Posterior cingulate gyrus (tissue), 11 donors: ENCODE measurements at regions of chr1 and their contacts with region 1.

Region 1: DNA sequence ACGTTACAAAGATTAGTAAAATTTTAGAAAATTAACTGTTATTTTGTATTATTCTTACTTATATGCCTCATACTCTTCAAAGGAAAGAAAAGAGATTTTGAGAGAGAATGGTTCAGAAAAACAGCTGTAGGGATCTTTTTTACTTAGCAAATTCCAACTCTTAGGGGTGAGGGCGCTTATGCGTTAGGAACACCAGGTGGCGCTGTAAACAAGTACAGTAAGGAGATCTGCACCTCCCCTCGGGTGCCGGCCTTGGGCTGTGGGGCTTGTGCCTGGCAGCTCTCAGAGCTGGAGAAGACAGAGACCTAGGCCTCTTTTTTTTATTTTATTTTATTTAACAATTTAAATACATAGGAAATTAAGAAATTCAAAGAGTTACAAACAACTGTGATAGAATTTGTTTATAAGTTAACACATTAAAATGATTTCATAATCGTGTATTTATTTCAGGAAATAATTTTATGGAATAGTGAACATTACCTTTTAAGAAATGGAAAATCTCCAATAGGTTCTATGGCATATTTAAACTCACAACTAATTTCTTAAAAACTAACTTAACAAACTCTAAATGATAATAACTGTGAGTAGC is 32.6 kb downstream of the UTP25 start:
- DNase-seq: peak; percentile 66 to 97 (median 84)

Region 2: DNA sequence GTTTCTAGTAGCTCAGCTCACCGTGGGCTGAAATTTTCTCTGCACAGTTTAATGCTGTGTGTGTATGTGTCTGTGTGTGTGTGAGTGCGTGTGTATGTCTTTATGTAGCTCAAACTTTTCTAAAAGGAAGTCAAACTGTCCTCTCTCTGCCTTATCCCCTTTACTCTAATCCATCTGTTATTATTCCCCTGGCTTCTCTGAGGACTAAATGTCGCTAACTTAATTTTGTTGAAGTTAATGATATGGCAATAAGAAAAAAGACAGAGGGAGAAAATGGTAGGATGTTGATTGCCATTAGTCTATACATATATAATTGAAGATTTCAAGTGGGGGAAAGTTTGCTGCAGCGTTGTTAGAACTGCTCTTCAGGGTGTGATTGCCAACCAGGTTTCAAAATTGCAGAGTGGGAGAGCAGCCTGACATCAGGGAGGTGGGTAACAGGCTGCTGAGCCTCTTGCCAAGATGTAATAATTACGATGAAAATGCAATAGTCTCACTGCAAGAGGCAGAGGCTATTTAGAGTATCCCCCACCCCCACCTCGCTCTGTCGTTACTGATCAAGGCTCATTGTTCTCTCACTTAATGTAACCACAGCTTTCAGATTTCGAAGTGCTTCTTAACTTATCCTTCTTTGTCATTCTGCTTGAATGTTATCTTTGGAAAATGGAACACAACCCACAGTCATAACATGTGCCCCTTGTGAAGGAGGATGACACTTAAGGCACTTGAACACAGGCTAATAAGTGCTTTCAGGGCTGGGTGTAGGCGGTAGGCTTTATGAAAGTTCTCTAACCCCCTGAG is 1057.2 kb before region 1 on chr1:
- intact Hi-C with region 1: no loop called
- DNase-seq: no peak

Region 3: GRCh38 chr1:209805875-209806760 is 54.3 kb before region 1 on chr1 and contains the start of gene IRF6:
- intact Hi-C with region 1: no loop called
- DNase-seq: peak in 1 of 10 donors; percentile 86

Region 4: GRCh38 chr1:209937996-209938959 is 77.9 kb after region 1 on chr1 and contains the start of gene SYT14:
- intact Hi-C with region 1: loop called (anchors 5 kb)
- DNase-seq: peak; percentile 35 to 95 (median 65)

Region 5: GRCh38 chr1:209989525-209989924 is 129.1 kb after region 1 on chr1:
- intact Hi-C with region 1: loop called (anchors 1 kb)
- DNase-seq: no peak